ENCODE measurements at regions of chr13 and their contacts with region 1.

Region 1: DNA sequence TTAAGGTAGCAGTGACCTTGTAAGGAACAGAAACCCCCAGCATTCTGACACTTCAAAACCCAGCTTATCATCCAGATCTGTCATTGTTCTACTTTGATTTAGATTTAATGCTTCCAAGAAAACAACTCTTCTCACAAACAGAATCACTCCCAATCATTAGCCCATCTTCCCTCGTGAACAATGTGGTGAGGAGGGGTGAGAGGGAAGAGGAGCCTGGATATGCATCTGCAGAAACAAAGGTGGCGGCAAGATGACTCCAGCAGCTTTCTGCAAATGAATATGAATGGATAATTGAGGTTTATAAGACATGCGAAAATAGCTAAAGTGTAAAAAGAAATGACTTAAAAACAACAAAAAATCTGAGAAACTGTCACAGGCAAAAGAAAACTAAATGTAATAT is 859.9 kb upstream of the SLC10A2 start:
- DNase-seq: no peak
- ATAC-seq: no peak
- H3K4me3 ChIP-seq: no peak overlapping the region
- H3K4me3 Mint-ChIP-seq: no peak overlapping the region
- H3K27ac ChIP-seq: no peak overlapping the region
- H3K27ac Mint-ChIP-seq: no peak overlapping the region
- H3K4me1 ChIP-seq: no peaks in the 10 kb centered on the region
- H3K4me1 Mint-ChIP-seq: no peaks in the 10 kb centered on the region
- H3K27me3 ChIP-seq: no peaks in the 10 kb centered on the region
- H3K27me3 Mint-ChIP-seq: no peaks in the 10 kb centered on the region
- CTCF ChIP-seq: no peak

Region 2: GRCh38 chr13:103772576-103772975 is 153.5 kb before region 1 on chr13:
- CTCF ChIA-PET with region 1: no interaction called
- POLR2A ChIA-PET with region 1: no interaction called
- intact Hi-C with region 1: loop called in 1 of 2 experiments (anchors 1 kb)
- DNase-seq: no peak
- ATAC-seq: no peak
- H3K4me3 ChIP-seq: no peak overlapping the region
- H3K4me3 Mint-ChIP-seq: no peak overlapping the region
- H3K27ac ChIP-seq: no peak overlapping the region
- H3K27ac Mint-ChIP-seq: no peak overlapping the region
- H3K4me1 ChIP-seq: no peaks in the 10 kb centered on the region
- H3K4me1 Mint-ChIP-seq: no peaks in the 10 kb centered on the region
- H3K27me3 ChIP-seq: no peaks in the 10 kb centered on the region
- H3K27me3 Mint-ChIP-seq: no peaks in the 10 kb centered on the region
- CTCF ChIP-seq: no peak

Region 3: DNA sequence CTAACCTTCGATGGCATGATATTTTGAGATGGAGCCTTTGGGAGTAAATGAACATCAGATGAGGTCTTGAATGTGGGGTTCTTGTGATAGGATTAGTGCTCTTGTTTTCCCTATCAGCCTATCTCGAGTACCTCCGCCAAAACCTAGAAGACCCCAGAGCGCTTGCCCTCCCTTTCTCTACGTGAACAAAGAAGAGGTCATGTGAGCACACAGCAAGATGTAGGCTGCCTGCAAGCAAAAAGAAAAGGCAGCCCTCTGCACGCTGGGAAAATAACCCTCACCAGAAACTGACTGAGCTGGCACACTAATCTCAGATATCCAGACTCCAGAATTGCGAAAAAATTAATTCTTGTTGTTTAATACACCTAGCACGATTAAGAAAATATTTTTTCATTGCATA is 60.1 kb before region 1 on chr13:
- CTCF ChIA-PET with region 1: no interaction called
- POLR2A ChIA-PET with region 1: no interaction called
- intact Hi-C with region 1: no loop called
- DNase-seq: no peak
- ATAC-seq: no peak
- H3K4me3 ChIP-seq: no peak overlapping the region
- H3K4me3 Mint-ChIP-seq: no peak overlapping the region
- H3K27ac ChIP-seq: no peak overlapping the region
- H3K27ac Mint-ChIP-seq: no peak overlapping the region
- H3K4me1 ChIP-seq: no peaks in the 10 kb centered on the region
- H3K4me1 Mint-ChIP-seq: no peaks in the 10 kb centered on the region
- H3K27me3 ChIP-seq: no peaks in the 10 kb centered on the region
- H3K27me3 Mint-ChIP-seq: no peaks in the 10 kb centered on the region
- CTCF ChIP-seq: no peak